ENCODE measurements at regions of chr1 and their contacts with region 1.

Region 1: GRCh38 chr1:235783148-235783776 is 83.4 kb downstream of the LYST start:
- DNase-seq: no peak
- ATAC-seq: peak in 3 of 4 donors; percentile 50 to 65 (median 54)
- H3K4me3 ChIP-seq: no peak overlapping the region
- H3K27ac ChIP-seq: no peak overlapping the region
- H3K4me1 ChIP-seq: no peaks in the 10 kb centered on the region
- H3K27me3 ChIP-seq: no peaks in the 10 kb centered on the region
- CTCF ChIP-seq: peak in 3 of 4 donors; percentile 28 to 38 (median 32)

Region 2: DNA sequence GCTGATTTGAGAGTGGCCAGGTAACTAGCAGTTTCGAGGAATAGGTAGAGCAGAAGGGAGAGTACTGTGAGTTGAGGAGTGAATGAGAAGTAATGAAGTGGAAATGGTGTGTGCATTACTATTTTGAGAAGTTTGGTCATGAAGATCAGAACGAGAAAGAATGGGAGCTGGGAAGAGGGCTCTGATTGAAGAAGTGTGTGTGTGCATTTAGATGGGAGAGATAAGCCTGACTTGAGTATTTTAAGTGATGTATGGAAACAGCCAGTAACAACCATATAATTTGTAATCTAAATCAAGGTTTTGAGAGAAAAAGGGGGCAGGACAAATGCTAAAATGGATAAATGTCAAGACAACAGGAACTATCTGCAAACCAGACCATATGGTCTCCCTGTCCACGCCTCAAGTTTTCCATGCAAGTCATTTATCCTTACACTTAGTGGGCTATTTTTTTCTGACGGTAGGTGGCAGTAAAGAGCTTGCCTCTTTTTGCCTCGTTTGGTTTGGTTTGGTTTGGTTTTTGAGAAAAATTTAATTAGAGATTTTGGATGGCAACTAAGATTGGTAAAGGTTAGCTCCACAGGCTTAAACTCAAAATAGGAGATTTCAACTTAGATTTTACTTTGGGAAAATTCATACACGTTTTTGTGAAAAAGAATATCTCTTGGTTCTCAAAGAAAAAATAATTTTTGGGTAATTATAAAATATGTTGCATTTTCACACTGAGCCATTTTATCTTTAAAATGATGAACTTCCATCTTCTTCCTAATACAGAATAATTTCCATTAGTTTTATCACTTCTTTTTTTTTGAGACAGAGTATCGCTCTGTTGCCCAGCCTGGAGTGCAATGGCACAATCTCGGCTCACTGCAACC is 269.5 kb before region 1 on chr1:
- intact Hi-C with region 1: loop called in 1 of 3 experiments (anchors 10 kb)
- DNase-seq: peak in 2 of 6 donors; percentile 22 to 36
- ATAC-seq: peak in 3 of 4 donors; percentile 84 to 86 (median 84)
- H3K4me3 ChIP-seq: no peak overlapping the region
- H3K27ac ChIP-seq: no peak overlapping the region
- H3K4me1 ChIP-seq: no peaks in the 10 kb centered on the region
- H3K27me3 ChIP-seq: no peaks in the 10 kb centered on the region
- CTCF ChIP-seq: peak; percentile 68 to 92 (median 85)

Region 3: GRCh38 chr1:235557495-235557894 is 225.8 kb before region 1 on chr1:
- intact Hi-C with region 1: no loop called
- DNase-seq: no peak
- ATAC-seq: no peak
- H3K4me3 ChIP-seq: no peak overlapping the region
- H3K27ac ChIP-seq: no peak overlapping the region
- H3K4me1 ChIP-seq: no peaks in the 10 kb centered on the region
- H3K27me3 ChIP-seq: no peaks in the 10 kb centered on the region
- CTCF ChIP-seq: no peak

Measured in pancreas (tissue), 10 donors.